CD4-positive, alpha-beta memory T cell (primary cell): ENCODE measurements at regions of chr10 and their contacts with region 1.

Region 1: GRCh38 chr10:22666287-22667092 is 47.9 kb downstream of the PIP4K2A start:
- DNase-seq: peak; percentile 79 to 88 (median 84)
- H3K4me3 ChIP-seq: peak overlapping the region; percentile 8 to 41
- H3K4me3 Mint-ChIP-seq: peak overlapping the region; percentile 72 to 94 (median 88)
- H3K27ac ChIP-seq: peak overlapping the region; percentile 49
- H3K27ac Mint-ChIP-seq: peak overlapping the region; percentile 50 to 97 (median 90)
- H3K4me1 ChIP-seq: peaks cover 98% of the 10 kb centered on the region
- H3K4me1 Mint-ChIP-seq: peaks cover 53 to 92% (median 72%) of the 10 kb centered on the region in 4 donors
- H3K27me3 ChIP-seq: no peaks in the 10 kb centered on the region
- H3K27me3 Mint-ChIP-seq: no peaks in the 10 kb centered on the region

Region 2: DNA sequence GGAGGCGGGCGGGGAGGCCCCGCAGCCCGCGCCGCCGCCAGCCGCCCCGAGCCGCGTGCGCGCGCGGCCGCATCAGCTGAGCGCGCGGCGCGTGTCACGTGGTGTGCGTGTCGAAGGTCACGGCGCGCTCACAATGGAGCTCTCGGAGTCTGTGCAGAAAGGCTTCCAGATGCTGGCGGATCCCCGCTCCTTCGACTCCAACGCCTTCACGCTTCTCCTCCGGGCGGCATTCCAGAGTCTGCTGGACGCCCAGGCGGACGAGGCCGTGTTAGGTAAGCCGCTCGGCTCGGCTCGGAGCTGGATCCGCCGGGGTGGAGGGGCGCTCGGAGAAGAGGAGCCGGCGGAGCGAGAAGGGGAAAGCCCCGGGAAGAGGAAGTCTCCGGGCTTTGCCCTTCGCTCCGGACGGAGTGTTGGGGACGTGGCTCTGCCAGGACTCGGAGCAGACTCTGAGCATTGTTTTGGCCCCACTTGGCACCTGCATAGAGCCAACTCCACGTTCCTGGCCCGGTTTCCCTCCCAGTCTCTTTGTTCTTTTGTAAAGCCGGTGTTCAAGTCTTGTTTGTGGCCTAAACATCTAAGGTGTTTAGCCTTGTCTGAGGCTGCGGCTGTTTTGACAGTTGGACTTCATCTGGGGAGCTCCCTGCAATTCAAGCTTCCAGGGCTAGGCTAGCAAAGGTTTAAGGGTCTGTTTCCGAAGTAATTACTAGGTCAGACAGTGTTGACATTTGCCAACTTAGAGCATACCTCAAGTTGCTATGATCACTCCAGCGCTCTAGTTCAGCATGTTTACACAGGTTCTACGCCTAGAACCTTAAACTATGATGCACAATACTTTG is 350.0 kb before region 1 on chr10 and contains the start of gene COMMD3:
- CTCF ChIA-PET with region 1: no interaction called
- POLR2A ChIA-PET with region 1: no interaction called
- intact Hi-C with region 1: loop called (anchors 5 kb)
- DNase-seq: peak; percentile 78 to 86 (median 82)
- H3K4me3 ChIP-seq: peak within 1 kb of the TSS; percentile 77 to 95
- H3K4me3 Mint-ChIP-seq: peak within 1 kb of the TSS; percentile 94 to 99 (median 98)
- H3K27ac ChIP-seq: peak within 1 kb of the TSS; percentile 71
- H3K27ac Mint-ChIP-seq: peak within 1 kb of the TSS; percentile 89 to 98 (median 98)
- H3K4me1 ChIP-seq: peaks cover 37% of the 10 kb centered on the region
- H3K4me1 Mint-ChIP-seq: peaks cover 22 to 50% (median 29%) of the 10 kb centered on the region in 4 donors
- H3K27me3 ChIP-seq: no peaks in the 10 kb centered on the region
- H3K27me3 Mint-ChIP-seq: peaks cover 3 to 4% of the 10 kb centered on the region in 2 donors
- total RNA-seq, gene COMMD3: 67.9 to 68.5 TPM

Region 3: GRCh38 chr10:22624289-22624738 is 42.2 kb before region 1 on chr10:
- CTCF ChIA-PET with region 1: interaction called, 4 read pairs
- POLR2A ChIA-PET with region 1: interaction called, 895 read pairs
- intact Hi-C with region 1: loop called (anchors 2 kb)
- DNase-seq: no peak
- H3K4me3 ChIP-seq: no peak overlapping the region
- H3K4me3 Mint-ChIP-seq: peak overlapping the region; percentile 1 to 85 (median 66)
- H3K27ac ChIP-seq: peak overlapping the region; percentile 40
- H3K27ac Mint-ChIP-seq: peak overlapping the region; percentile 26 to 96 (median 89)
- H3K4me1 ChIP-seq: peaks cover 99% of the 10 kb centered on the region
- H3K4me1 Mint-ChIP-seq: peaks cover 80 to 100% (median 91%) of the 10 kb centered on the region in 4 donors
- H3K27me3 ChIP-seq: no peaks in the 10 kb centered on the region
- H3K27me3 Mint-ChIP-seq: no peaks in the 10 kb centered on the region

Region 4: GRCh38 chr10:22648547-22648961 is 17.9 kb before region 1 on chr10:
- CTCF ChIA-PET with region 1: interaction called, 7 read pairs
- POLR2A ChIA-PET with region 1: interaction called, 188 read pairs
- intact Hi-C with region 1: loop called (anchors 2 kb)
- DNase-seq: peak in 1 of 5 donors; percentile 27
- H3K4me3 ChIP-seq: peak overlapping the region in 1 of 2 donors; percentile 44
- H3K4me3 Mint-ChIP-seq: peak overlapping the region; percentile 67 to 91 (median 78)
- H3K27ac ChIP-seq: peak overlapping the region; percentile 61
- H3K27ac Mint-ChIP-seq: peak overlapping the region; percentile 85 to 96 (median 95)
- H3K4me1 ChIP-seq: peaks cover 100% of the 10 kb centered on the region
- H3K4me1 Mint-ChIP-seq: peaks cover 82 to 96% (median 90%) of the 10 kb centered on the region in 4 donors
- H3K27me3 ChIP-seq: no peaks in the 10 kb centered on the region
- H3K27me3 Mint-ChIP-seq: no peaks in the 10 kb centered on the region

Region 5: GRCh38 chr10:22714479-22715289 is 48.2 kb after region 1 on chr10 and contains the start of gene PIP4K2A:
- CTCF ChIA-PET with region 1: interaction called, 5 read pairs
- POLR2A ChIA-PET with region 1: interaction called, 189 read pairs
- intact Hi-C with region 1: loop called (anchors 5 kb)
- DNase-seq: peak; percentile 71 to 84 (median 81)
- H3K4me3 ChIP-seq: peak within 1 kb of the TSS; percentile 77 to 79
- H3K4me3 Mint-ChIP-seq: peak within 1 kb of the TSS; percentile 87 to 98 (median 96)
- H3K27ac ChIP-seq: peak within 1 kb of the TSS; percentile 88
- H3K27ac Mint-ChIP-seq: peak within 1 kb of the TSS; percentile 88 to 96 (median 92)
- H3K4me1 ChIP-seq: peaks cover 34% of the 10 kb centered on the region
- H3K4me1 Mint-ChIP-seq: peaks cover 28 to 40% (median 31%) of the 10 kb centered on the region in 4 donors
- H3K27me3 ChIP-seq: no peaks in the 10 kb centered on the region
- H3K27me3 Mint-ChIP-seq: no peaks in the 10 kb centered on the region
- total RNA-seq, gene PIP4K2A: 171 to 179 TPM